ENCODE measurements at regions of chr15 and their contacts with region 1.

Region 1: DNA sequence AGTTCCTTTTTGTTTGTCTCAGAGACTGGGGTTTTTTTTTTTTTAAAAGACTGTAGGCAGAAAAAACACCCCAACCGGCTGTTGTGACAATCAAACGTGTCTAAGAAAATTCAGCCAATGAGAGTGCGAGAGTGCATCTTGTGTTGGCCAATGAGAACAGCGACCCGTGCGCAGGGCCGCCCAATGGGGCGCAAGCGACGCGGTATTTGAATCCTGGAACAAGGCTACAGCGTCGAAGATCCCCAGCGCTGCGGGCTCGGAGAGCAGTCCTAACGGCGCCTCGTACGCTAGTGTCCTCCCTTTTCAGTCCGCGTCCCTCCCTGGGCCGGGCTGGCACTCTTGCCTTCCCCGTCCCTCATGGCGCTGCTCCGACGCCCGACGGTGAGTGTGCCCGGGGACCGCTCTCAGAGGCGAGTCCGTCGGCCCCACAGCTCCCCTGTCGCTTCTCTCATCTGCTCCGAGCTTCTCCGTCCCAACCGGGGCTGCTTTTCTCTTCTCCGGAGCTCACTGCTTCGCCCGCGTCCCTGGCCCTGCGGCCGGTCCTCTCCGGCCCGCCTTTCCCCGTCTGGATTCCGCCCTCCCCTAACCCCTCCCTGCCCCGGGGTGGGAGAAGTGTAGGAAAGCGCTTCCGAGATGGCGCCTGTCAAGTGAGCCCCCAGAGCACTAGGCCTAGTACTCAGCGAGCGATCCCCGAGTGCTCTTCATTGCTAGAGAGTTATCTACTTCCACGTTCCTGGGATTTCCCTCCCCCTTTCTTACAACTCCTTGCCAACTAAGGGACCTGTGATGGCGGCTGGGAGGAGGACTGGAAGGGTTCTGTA is at the start of gene CCNB2:
- DNase-seq: peak; percentile 85
- H3K4me3 Mint-ChIP-seq: peak within 1 kb of the TSS; percentile 96
- H3K27ac Mint-ChIP-seq: peak within 1 kb of the TSS; percentile 99
- H3K4me1 Mint-ChIP-seq: peaks cover 46% of the 10 kb centered on the region
- H3K27me3 Mint-ChIP-seq: no peaks in the 10 kb centered on the region
- total RNA-seq, gene CCNB2: 36.6 and 38.2 TPM in 2 replicates

Region 2: DNA sequence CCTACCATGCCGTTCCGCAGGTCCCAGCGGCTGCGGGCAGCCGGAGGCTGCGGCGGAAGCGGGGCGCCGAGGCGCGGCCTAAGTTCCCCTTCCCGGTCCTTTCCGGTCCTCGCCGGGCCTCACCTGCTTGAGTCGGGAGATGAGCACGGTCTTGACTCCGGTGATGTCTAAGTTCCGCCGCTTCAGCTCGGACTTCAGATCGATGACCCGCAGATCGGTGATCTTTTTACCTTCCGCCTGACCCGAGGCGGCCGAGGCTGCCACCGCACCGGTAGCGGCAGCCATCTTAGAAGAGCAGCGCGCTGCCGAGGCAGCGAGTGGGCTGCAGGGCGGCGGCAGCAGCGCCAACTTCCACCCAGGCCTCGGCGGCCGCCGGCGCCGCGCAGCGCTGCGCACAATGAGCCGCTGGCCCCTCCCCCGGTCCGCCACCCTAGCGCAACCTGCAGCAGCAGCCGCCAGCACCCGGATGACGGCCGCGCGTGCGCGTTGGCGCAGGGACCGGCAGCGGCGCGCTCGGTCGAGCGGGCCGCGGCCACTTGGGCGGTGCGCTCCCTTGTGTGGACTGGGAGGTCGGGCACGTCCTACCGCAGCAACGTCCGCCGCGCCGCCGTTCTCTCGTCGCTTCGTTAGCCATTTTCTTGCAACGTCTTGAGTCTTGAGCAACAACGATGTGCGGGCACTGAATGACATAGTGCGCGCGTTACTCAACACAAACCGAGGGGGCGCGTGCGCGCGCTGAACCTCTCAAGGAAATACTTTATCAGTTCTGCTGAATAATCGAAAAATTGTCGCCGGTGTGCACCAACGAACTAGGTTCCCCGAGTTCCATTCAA is 171.6 kb before region 1 on chr15 and contains the start of gene SLTM:
- intact Hi-C with region 1: loop called (anchors 2 kb)
- DNase-seq: peak; percentile 88
- H3K4me3 Mint-ChIP-seq: peak within 1 kb of the TSS; percentile 98
- H3K27ac Mint-ChIP-seq: peak within 1 kb of the TSS; percentile 100
- H3K4me1 Mint-ChIP-seq: peaks cover 34% of the 10 kb centered on the region
- H3K27me3 Mint-ChIP-seq: no peaks in the 10 kb centered on the region
- total RNA-seq, gene SLTM: 142 and 143 TPM in 2 replicates

Region 3: DNA sequence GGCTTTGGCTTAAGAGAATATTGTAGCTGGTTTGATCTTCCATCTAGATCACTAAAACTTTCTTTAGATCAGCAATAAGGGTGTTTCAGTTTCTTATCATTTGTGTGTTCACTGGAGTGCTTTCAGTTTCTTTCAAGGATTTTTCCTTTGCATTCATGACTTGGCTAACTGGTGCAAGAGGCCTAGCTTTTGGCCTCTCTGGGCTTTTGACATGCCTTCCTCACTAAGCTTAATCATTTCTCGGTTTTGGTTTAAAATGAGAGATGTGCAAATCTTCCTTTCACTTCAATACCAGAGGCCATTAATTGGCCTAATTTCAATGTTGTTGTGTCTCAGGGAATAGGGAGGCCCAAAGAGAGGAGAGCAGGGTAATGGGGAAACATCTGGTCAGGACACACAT is 30.5 kb before region 1 on chr15:
- intact Hi-C with region 1: loop called (anchors 1 kb)
- DNase-seq: no peak
- H3K4me3 Mint-ChIP-seq: no peak overlapping the region
- H3K27ac Mint-ChIP-seq: peak overlapping the region; percentile 41
- H3K4me1 Mint-ChIP-seq: peaks cover 17% of the 10 kb centered on the region
- H3K27me3 Mint-ChIP-seq: no peaks in the 10 kb centered on the region

Region 4: GRCh38 chr15:59492389-59493377 is 387.6 kb after region 1 on chr15:
- intact Hi-C with region 1: loop called (anchors 5 kb)
- DNase-seq: peak; percentile 25
- H3K4me3 Mint-ChIP-seq: no peak overlapping the region
- H3K27ac Mint-ChIP-seq: no peak overlapping the region
- H3K4me1 Mint-ChIP-seq: no peaks in the 10 kb centered on the region
- H3K27me3 Mint-ChIP-seq: peaks cover 32% of the 10 kb centered on the region

Region 5: DNA sequence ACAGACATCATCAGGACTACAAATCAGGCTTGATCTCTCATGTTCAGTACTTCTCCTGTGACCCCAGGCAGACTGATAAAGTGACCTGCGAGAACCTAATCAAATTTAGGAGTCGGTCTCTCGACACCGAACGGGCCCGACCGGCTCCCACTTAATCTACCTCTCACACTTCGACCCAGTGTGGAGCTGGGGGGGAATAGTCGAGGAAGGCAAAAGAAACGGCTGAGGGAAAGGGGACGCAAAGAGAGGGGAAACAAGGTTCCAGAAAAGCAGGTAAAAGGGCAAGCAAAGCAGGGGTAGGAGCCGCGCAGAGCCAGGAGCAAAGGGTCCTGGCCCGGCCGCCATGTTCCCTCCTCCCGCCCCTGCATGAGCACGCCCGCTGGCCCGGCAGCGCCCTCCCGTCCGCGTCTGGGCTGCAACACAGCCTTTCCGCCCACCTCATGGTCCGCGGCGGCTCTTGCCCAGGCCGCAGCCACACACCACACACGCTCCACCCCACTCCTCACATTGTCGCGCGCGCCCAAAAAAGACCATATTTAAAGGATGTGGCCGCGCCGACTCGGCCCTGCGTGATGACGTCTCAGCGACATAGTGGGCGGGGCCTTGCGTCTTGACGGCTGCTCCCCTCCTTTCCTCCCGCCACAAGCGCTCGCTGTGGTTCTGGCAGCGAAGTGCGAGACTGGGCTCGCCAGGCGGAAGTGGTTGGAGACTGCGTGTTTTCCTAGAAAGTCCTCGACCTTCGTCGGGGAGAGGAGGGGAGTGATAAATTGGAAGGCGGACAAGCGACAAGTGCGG is 1373.6 kb after region 1 on chr15 and contains the start of gene ICE2:
- intact Hi-C with region 1: loop called (anchors 10 kb)
- DNase-seq: peak; percentile 95
- H3K4me3 Mint-ChIP-seq: peak within 1 kb of the TSS; percentile 97
- H3K27ac Mint-ChIP-seq: peak within 1 kb of the TSS; percentile 97
- H3K4me1 Mint-ChIP-seq: peaks cover 52% of the 10 kb centered on the region
- H3K27me3 Mint-ChIP-seq: no peaks in the 10 kb centered on the region
- total RNA-seq, gene ICE2: 51.9 and 56.1 TPM in 2 replicates